ENCODE measurements at regions of chr1 and their contacts with region 1.

Region 1: DNA sequence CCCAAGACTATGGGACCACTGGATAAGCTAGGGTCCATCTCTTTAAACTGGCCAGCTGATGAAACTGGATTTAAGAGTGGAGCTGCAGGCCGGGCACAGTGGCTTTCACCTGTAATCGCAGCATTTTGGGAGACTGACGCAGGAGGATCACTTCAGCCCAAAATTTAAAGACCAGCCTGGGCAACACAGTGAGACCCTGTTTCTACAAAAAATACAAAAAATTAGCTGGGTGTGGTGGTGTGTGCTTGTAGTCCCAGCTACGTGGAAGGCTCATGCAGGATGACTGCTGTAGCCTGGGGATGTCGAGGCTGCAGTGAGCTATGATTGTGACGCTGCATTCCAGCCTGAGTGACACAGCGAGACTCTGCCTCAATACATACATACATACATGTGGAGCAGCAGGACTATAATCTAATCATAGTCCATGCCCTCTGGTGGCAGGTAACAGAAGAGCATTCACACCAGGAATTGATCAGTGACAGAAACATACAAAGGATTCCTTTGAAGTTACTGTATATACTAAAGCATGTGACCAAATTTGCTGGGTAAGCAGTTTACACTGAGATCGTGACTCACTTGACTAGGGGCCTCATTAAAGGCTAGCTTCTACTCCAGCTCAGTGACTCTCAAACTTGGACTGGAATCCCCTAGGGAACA is 101.5 kb upstream of the SLFNL1 start:
- DNase-seq: peak; percentile 76
- H3K4me3 Mint-ChIP-seq: no peak overlapping the region
- H3K27ac Mint-ChIP-seq: peak overlapping the region; percentile 61
- H3K4me1 Mint-ChIP-seq: peaks cover 15% of the 10 kb centered on the region
- H3K27me3 Mint-ChIP-seq: no peaks in the 10 kb centered on the region
- CTCF ChIP-seq: peak; percentile 42

Region 2: GRCh38 chr1:40646315-40646714 is 476.7 kb before region 1 on chr1:
- CTCF ChIA-PET with region 1: no interaction called
- POLR2A ChIA-PET with region 1: no interaction called
- intact Hi-C with region 1: no loop called
- DNase-seq: peak; percentile 60
- H3K4me3 Mint-ChIP-seq: no peak overlapping the region
- H3K27ac Mint-ChIP-seq: no peak overlapping the region
- H3K4me1 Mint-ChIP-seq: peaks cover 6% of the 10 kb centered on the region
- H3K27me3 Mint-ChIP-seq: no peaks in the 10 kb centered on the region
- CTCF ChIP-seq: no peak

Region 3: GRCh38 chr1:41023279-41023990 is 99.5 kb before region 1 on chr1:
- CTCF ChIA-PET with region 1: interaction called, 13 read pairs
- POLR2A ChIA-PET with region 1: interaction called, 5 read pairs
- intact Hi-C with region 1: loop called (anchors 5 kb)
- DNase-seq: peak; percentile 26
- H3K4me3 Mint-ChIP-seq: no peak overlapping the region
- H3K27ac Mint-ChIP-seq: no peak overlapping the region
- H3K4me1 Mint-ChIP-seq: peaks cover 7% of the 10 kb centered on the region
- H3K27me3 Mint-ChIP-seq: no peaks in the 10 kb centered on the region
- CTCF ChIP-seq: peak; percentile 6

Region 4: DNA sequence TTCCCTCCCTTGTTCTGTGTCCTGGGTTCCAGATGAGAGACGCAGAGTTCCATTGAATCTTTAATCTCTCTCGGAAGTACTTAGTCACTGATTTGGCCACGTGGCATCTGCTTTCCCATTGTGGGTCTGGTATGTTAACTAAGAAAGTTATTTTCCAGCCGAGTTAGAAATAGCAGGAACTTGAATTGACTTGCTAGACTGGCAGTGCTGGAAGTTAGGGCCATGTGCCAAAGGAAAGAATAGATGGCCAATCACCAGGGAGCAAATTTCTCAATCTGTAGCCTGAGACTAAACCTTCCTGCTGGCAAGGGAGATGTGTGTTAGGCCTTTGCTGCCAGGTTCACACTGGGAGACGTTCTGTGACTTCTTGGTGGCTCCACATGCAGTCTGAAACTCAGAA is 77.2 kb before region 1 on chr1:
- CTCF ChIA-PET with region 1: interaction called, 5 read pairs
- POLR2A ChIA-PET with region 1: interaction called, 4 read pairs
- intact Hi-C with region 1: loop called (anchors 5 kb)
- DNase-seq: peak; percentile 95
- H3K4me3 Mint-ChIP-seq: peak overlapping the region; percentile 44
- H3K27ac Mint-ChIP-seq: peak overlapping the region; percentile 97
- H3K4me1 Mint-ChIP-seq: peaks cover 35% of the 10 kb centered on the region
- H3K27me3 Mint-ChIP-seq: no peaks in the 10 kb centered on the region
- CTCF ChIP-seq: no peak

Region 5: GRCh38 chr1:41135196-41135947 is 12.4 kb after region 1 on chr1:
- CTCF ChIA-PET with region 1: interaction called, 14 read pairs
- POLR2A ChIA-PET with region 1: interaction called, 10 read pairs
- intact Hi-C with region 1: no loop called
- DNase-seq: no peak
- H3K4me3 Mint-ChIP-seq: no peak overlapping the region
- H3K27ac Mint-ChIP-seq: no peak overlapping the region
- H3K4me1 Mint-ChIP-seq: no peaks in the 10 kb centered on the region
- H3K27me3 Mint-ChIP-seq: no peaks in the 10 kb centered on the region
- CTCF ChIP-seq: no peak

Region 6: DNA sequence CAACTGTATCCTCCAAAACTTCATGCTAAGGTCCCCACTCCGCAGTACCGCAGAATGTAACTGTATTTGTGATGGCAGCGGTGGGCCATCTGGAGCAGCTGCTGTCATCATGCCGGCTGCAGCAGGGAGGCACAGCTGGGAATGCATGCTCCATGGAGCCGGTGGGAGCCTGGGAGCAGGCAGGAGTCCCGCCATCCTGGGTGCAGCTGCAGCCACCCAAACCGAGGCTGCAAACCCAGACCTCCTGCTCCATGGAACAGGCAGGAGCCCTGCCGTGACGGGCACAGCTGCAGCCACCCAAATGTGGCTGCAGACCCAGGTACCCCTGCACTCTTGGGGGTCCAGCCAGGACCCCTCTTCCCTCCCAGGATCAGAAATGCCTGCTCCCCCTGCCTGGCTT is 38.9 kb after region 1 on chr1:
- CTCF ChIA-PET with region 1: no interaction called
- POLR2A ChIA-PET with region 1: no interaction called
- intact Hi-C with region 1: no loop called
- DNase-seq: no peak
- H3K4me3 Mint-ChIP-seq: no peak overlapping the region
- H3K27ac Mint-ChIP-seq: no peak overlapping the region
- H3K4me1 Mint-ChIP-seq: peaks cover 9% of the 10 kb centered on the region
- H3K27me3 Mint-ChIP-seq: no peaks in the 10 kb centered on the region
- CTCF ChIP-seq: no peak

Region 7: GRCh38 chr1:41241782-41242341 is 118.9 kb after region 1 on chr1 and contains the start of gene SCMH1:
- CTCF ChIA-PET with region 1: interaction called, 8 read pairs
- POLR2A ChIA-PET with region 1: interaction called, 9 read pairs
- intact Hi-C with region 1: loop called (anchors 2 kb)
- DNase-seq: peak; percentile 32
- H3K4me3 Mint-ChIP-seq: peak within 1 kb of the TSS; percentile 73
- H3K27ac Mint-ChIP-seq: peak within 1 kb of the TSS; percentile 76
- H3K4me1 Mint-ChIP-seq: peaks cover 6% of the 10 kb centered on the region
- H3K27me3 Mint-ChIP-seq: no peaks in the 10 kb centered on the region
- CTCF ChIP-seq: no peak
- total RNA-seq, gene SCMH1: 51.4 and 55.9 TPM in 2 replicates

Measured in MCF 10A (cell line).